Right lobe of liver (tissue), 6 donors: ENCODE measurements at regions of chr13 and their contacts with region 1.

Region 1: GRCh38 chr13:80342471-80343380 is 1.8 kb upstream of the SPRY2 start:
- DNase-seq: peak; percentile 89 to 91 (median 91)
- ATAC-seq: peak; percentile 60 to 72 (median 68)
- H3K4me3 ChIP-seq: peak overlapping the region; percentile 83 to 89 (median 87)
- H3K27ac ChIP-seq: peak overlapping the region; percentile 95 to 98 (median 97)
- H3K4me1 ChIP-seq: peaks cover 0 to 3% (median 0%) of the 10 kb centered on the region in 4 donors
- H3K27me3 ChIP-seq: no peaks in the 10 kb centered on the region
- CTCF ChIP-seq: peak; percentile 97 to 100 (median 99)
- POLR2A ChIP-seq: peak; percentile 83

Region 2: DNA sequence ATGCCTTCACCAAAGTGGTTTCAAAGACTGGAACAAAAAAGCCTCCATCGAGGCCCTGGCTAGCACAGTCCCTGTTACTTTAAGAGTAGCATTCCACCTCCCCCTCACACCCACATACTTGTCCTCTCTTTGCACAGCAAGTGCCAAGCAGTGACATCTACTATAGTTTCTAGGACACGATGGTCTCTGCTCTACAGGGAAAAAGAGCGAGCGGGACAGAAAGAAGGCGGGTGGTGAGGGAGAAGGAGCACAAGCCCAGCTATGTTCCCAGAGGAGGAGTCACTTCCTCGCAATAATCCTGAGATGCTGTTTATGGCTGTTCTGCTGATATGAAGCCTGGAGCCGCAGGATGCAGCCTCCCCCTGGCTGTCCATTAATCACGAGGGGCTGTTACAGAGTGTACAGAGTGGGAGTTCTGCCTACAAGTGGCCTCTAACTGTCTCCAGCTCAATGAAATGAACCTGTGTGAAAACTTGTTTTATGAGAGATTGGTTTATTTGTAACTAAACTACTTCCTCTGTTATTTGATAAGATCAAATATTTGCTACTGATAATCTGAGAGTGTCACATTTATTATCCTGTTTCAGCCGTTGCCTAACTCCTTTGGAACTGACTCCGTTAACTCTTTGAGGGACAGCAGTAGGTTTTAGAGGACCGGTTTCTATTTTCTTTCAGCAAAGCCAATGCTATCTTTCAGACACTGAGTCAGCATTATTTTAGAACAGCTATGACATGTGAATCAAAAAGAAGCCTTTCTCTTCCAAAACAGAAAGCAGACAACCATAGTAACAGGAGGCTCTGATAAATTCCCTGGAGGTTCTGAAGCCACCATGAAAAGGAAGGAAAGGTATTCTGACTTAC is 209.8 kb before region 1 on chr13:
- intact Hi-C with region 1: loop called in 1 of 2 experiments (anchors 5 kb)
- DNase-seq: peak; percentile 25 to 75 (median 62)
- ATAC-seq: peak; percentile 82 to 91 (median 88)
- H3K4me3 ChIP-seq: peak overlapping the region; percentile 20 to 49 (median 42)
- H3K27ac ChIP-seq: peak overlapping the region; percentile 63 to 83 (median 77)
- H3K4me1 ChIP-seq: peaks cover 0 to 28% (median 12%) of the 10 kb centered on the region in 4 donors
- H3K27me3 ChIP-seq: no peaks in the 10 kb centered on the region
- CTCF ChIP-seq: no peak
- POLR2A ChIP-seq: peak; percentile 81